ENCODE measurements at regions of chr5 and their contacts with region 1.

Region 1: DNA sequence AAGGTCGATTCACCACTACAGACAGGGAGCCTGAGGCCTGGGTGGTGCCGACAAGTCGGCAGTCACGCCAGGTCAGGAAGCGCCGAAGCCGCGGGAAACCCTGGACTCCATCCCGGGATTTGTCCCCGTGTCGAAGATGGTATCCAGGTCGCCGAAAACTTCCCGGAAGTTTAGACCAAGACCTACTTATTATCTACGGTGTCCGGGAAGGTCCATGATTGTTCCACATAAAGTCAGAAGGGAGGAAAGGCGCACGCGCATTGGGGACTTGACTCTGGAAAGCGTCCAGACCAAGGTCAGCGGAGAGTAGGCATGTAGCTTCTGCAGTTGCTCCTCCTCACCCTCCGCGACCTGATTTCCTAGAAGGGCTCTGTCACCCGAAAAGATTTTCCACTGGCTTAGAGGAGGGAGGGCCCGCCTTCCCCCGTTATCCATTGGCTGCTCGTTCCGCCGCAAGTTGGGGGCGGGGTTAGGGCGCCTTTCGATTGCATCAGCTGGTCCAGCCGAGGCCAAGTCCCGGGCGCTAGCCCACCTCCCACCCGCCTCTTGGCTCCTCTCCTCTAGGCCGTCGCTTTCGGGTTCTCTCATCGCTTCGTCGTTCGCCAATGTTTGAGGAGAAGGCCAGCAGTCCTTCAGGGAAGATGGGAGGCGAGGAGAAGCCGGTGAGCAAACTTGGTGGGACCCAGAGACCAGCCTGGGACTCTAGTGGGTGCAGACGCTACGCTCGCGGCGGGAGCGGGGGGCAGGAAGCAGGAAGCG is at the start of gene TARS1:
- DNase-seq: peak; percentile 96
- H3K4me3 ChIP-seq: peak within 1 kb of the TSS; percentile 84
- H3K27ac ChIP-seq: peak within 1 kb of the TSS; percentile 66
- H3K4me1 ChIP-seq: peaks cover 15% of the 10 kb centered on the region
- CTCF ChIP-seq: no peak
- total RNA-seq, gene TARS1: 101 and 118 TPM in 2 replicates

Region 2: DNA sequence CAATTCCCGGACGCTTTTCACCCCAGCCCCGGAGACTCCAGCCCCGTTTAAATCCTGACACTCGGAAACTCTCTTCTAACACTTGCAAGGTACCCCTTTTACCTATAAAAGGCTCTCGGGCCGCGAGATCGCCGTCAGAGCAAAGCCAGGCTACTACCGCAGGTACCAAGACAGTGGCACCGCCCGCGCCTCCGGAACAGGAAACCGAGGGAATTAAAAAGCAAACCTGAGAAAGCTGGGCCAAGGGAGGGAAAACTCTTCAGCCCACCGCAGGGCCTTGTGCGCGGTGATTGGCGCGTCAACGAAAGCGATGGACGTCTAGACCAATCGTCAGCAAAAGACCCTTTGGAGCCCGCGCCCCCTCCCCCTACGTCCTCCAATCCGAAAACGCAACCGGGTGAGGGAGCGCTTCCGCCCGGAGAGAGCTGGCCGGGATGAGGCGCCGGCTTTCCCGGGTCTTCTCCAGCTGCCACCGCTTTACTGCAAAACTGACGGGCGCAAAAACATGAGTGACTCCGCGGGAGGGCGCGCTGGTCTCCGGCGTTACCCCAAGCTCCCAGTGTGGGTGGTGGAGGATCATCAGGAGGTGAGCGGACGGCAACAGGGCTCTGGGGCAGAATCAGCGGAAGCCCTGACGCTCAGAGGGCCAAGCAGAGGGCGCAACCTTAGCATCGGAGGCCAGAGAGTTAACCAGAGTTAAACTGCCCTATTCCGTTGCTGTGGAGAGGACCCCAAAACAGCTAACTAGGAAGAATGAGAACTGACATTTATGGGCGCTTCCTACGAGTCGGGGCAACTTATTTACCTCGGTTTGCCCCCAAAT is 1908.6 kb before region 1 on chr5 and contains the starts of genes C5orf22 and DROSHA:
- CTCF ChIA-PET with region 1: no interaction called
- POLR2A ChIA-PET with region 1: no interaction called
- intact Hi-C with region 1: loop called (anchors 10 kb)
- DNase-seq: peak; percentile 96
- H3K4me3 ChIP-seq: peak within 1 kb of the TSS; percentile 78
- H3K27ac ChIP-seq: peak within 1 kb of the TSS; percentile 74
- H3K4me1 ChIP-seq: peaks cover 34% of the 10 kb centered on the region
- CTCF ChIP-seq: peak; percentile 52
- total RNA-seq, gene C5orf22: 20.5 and 21.6 TPM in 2 replicates
- total RNA-seq, gene DROSHA: 56.3 and 97.9 TPM in 2 replicates

Region 3: DNA sequence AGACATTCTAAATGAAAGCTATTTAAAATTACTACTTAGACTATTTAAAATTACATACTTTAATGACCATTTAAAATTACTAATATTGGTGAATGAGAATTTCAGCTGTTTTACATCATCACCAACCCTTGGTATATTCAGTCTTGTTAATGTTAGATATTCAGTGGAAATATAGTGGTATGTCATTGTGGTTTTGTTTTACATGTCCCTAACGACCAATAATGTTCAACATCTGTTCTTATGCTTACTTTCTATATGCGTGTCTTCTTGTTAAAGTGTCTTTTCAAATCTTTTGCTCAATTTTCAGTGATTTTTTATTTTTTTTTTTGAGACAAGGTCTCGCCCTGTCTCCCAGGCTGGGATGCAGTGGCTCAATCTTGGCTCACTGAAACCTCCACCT is 279.2 kb before region 1 on chr5:
- CTCF ChIA-PET with region 1: no interaction called
- POLR2A ChIA-PET with region 1: no interaction called
- intact Hi-C with region 1: no loop called
- DNase-seq: no peak
- H3K4me3 ChIP-seq: no peak overlapping the region
- H3K27ac ChIP-seq: no peak overlapping the region
- H3K4me1 ChIP-seq: no peaks in the 10 kb centered on the region
- CTCF ChIP-seq: no peak

Region 4: GRCh38 chr5:33701251-33701650 is 260.6 kb after region 1 on chr5:
- CTCF ChIA-PET with region 1: no interaction called
- POLR2A ChIA-PET with region 1: no interaction called
- intact Hi-C with region 1: no loop called
- DNase-seq: no peak
- H3K4me3 ChIP-seq: no peak overlapping the region
- H3K27ac ChIP-seq: no peak overlapping the region
- H3K4me1 ChIP-seq: no peaks in the 10 kb centered on the region
- CTCF ChIP-seq: no peak

Region 5: GRCh38 chr5:33934176-33934575 is 493.5 kb after region 1 on chr5:
- CTCF ChIA-PET with region 1: no interaction called
- POLR2A ChIA-PET with region 1: no interaction called
- intact Hi-C with region 1: loop called (anchors 1 kb)
- DNase-seq: no peak
- H3K4me3 ChIP-seq: no peak overlapping the region
- H3K27ac ChIP-seq: no peak overlapping the region
- H3K4me1 ChIP-seq: no peaks in the 10 kb centered on the region
- CTCF ChIP-seq: no peak

Region 6: DNA sequence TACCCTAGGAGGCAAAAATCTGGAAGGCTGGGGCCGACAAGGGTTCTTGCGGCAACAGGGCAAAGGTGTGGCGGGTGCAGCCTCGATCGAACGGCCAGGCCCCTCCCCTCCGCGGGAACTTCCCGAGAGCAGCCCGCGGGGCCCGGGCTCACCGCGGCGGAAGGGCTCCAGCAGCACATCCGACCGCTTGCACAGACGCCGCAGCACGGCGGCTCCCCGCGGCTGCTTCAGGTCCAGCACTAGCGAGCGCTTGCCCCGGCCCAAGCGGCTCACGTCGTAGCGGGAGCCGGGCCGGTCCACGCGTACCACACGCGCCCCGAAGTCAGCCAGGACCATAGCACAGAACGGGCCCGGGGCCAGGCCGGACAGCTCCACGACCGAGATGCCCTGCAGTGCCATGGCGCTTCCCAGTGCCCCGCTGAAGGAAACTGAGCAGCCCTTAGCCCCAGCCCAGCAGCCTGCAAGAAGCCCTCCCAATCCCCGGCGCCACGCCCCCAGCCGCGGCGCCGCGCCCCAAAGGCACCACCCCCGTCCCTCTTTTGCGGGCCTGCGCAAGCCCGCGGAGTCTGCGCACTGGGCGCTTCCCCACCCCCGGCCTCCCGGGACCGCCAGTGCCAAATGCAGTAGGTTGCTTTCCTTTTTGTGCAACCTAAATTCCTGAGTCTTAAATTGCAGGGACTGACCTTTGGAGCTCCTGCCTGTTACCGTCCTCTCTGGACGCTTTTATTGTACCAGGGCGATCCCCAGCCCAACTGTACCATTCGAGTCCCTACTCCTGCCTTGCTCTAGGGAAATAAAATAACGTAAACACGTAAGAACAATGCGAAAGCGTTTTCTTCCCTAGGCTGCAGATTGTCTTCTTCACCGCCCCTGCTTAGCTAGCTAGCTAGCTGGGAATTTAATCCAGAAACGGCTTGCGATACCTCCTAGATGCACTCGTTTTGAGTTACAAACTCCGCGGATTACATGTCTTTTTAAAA is 567.2 kb after region 1 on chr5 and contains the start of gene AMACR:
- CTCF ChIA-PET with region 1: no interaction called
- POLR2A ChIA-PET with region 1: no interaction called
- intact Hi-C with region 1: loop called (anchors 10 kb)
- DNase-seq: peak; percentile 90
- H3K4me3 ChIP-seq: peak within 1 kb of the TSS; percentile 72
- H3K27ac ChIP-seq: peak within 1 kb of the TSS; percentile 65
- H3K4me1 ChIP-seq: peaks cover 19% of the 10 kb centered on the region
- CTCF ChIP-seq: 0 out of 2 replicates have a peak, but pooled peaks have one; percentile 31
- total RNA-seq, gene AMACR: 4.1 and 4.5 TPM in 2 replicates

Region 7: GRCh38 chr5:34464830-34465229 is 1024.2 kb after region 1 on chr5:
- CTCF ChIA-PET with region 1: no interaction called
- POLR2A ChIA-PET with region 1: no interaction called
- intact Hi-C with region 1: loop called (anchors 5 kb)
- DNase-seq: no peak
- H3K4me3 ChIP-seq: no peak overlapping the region
- H3K27ac ChIP-seq: no peak overlapping the region
- H3K4me1 ChIP-seq: no peaks in the 10 kb centered on the region
- CTCF ChIP-seq: no peak